Activated CD4-positive, alpha-beta T cell treated with anti-CD3 and anti-CD28 coated beads for 36 hours (primary cell): ENCODE measurements at regions of chr1 and their contacts with region 1.

Region 1: GRCh38 chr1:145978854-145979759 is 14.6 kb downstream of the POLR3GL start:
- DNase-seq: peak; percentile 91
- ATAC-seq: peak; percentile 86
- H3K4me3 Mint-ChIP-seq: no peak overlapping the region
- H3K27ac Mint-ChIP-seq: no peak overlapping the region
- H3K4me1 Mint-ChIP-seq: peaks cover 5% of the 10 kb centered on the region
- H3K27me3 Mint-ChIP-seq: no peaks in the 10 kb centered on the region

Region 2: DNA sequence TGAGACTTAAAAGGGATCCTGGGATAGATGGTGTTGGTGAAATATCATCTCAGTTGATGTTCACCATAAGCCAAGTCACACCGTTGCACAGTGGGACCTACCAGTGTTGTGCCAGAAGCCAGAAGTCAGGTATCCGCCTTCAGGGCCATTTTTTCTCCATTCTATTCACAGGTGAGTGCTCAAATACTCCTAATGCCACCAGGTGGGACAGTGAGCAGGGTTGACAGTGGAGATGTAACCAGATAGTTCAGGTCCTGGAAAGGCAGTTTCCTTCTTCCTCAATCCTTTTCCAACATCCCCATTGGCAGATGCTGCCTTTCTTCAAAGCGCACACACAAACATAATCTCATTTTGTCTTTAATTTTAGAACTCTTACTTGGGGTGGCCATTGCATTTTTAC is 248.2 kb before region 1 on chr1:
- CTCF ChIA-PET with region 1: no interaction called
- POLR2A ChIA-PET with region 1: no interaction called
- intact Hi-C with region 1: no loop called
- DNase-seq: no peak
- ATAC-seq: no peak
- H3K4me3 Mint-ChIP-seq: no peak overlapping the region
- H3K27ac Mint-ChIP-seq: no peak overlapping the region
- H3K4me1 Mint-ChIP-seq: no peaks in the 10 kb centered on the region
- H3K27me3 Mint-ChIP-seq: no peaks in the 10 kb centered on the region

Region 3: DNA sequence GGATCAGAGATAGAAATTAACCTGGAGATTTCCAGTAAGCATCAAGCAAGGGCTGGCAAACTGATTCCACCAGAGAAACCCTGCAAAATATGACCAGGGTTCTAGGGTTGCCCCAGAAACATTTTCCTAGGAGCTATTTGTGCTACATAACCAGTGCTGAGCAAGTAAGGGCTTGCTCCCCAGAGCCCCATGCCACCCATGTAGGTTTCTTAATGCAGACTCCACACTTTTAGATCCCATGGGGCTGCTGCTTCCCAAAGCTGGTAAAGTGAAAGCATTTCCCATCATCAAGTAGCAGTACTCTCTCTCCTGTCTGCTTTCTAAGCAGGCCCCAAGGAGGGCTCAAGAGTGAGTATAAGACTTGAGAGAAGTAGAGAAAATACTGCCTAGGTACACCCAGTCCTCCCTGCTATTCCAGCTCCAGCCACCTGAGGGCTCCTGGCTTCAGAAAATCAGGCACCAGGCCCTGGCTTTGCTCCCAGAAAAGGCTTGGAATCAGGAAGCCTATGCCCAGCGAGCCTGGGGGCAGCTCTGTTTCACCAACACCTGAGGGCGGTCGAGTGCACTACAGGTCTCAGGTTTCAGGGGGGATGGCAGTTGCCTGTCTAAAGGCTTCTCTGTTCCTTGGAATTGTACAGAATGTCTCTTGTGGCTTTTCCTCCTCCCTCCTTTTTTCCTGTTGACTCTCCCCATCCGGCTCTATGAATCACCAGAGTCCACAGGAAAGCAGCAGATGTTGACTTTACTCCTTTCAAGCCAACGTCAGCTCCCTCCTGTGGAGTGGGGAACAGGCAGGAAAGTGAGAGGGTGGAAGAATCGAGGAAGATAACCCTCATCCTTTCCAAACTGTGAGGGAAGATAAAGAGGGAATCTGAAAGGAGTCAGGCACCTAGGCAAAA is 87.3 kb before region 1 on chr1:
- CTCF ChIA-PET with region 1: interaction called, 5 read pairs
- POLR2A ChIA-PET with region 1: no interaction called
- intact Hi-C with region 1: loop called in 1 of 2 experiments (anchors 1 kb)
- DNase-seq: peak; percentile 74
- ATAC-seq: peak; percentile 78
- H3K4me3 Mint-ChIP-seq: no peak overlapping the region
- H3K27ac Mint-ChIP-seq: no peak overlapping the region
- H3K4me1 Mint-ChIP-seq: no peaks in the 10 kb centered on the region
- H3K27me3 Mint-ChIP-seq: no peaks in the 10 kb centered on the region

Region 4: GRCh38 chr1:145957443-145958319 is 21.4 kb before region 1 on chr1 and contains the start of gene LIX1L:
- CTCF ChIA-PET with region 1: interaction called, 46 read pairs
- POLR2A ChIA-PET with region 1: interaction called, 12 read pairs
- intact Hi-C with region 1: loop called in 1 of 2 experiments (anchors 1 kb)
- DNase-seq: peak; percentile 98
- ATAC-seq: peak; percentile 89
- H3K4me3 Mint-ChIP-seq: peak within 1 kb of the TSS; percentile 87
- H3K27ac Mint-ChIP-seq: peak within 1 kb of the TSS; percentile 93
- H3K4me1 Mint-ChIP-seq: peaks cover 59% of the 10 kb centered on the region
- H3K27me3 Mint-ChIP-seq: no peaks in the 10 kb centered on the region
- total RNA-seq, gene LIX1L: 44.9 to 49.4 TPM

Region 5: DNA sequence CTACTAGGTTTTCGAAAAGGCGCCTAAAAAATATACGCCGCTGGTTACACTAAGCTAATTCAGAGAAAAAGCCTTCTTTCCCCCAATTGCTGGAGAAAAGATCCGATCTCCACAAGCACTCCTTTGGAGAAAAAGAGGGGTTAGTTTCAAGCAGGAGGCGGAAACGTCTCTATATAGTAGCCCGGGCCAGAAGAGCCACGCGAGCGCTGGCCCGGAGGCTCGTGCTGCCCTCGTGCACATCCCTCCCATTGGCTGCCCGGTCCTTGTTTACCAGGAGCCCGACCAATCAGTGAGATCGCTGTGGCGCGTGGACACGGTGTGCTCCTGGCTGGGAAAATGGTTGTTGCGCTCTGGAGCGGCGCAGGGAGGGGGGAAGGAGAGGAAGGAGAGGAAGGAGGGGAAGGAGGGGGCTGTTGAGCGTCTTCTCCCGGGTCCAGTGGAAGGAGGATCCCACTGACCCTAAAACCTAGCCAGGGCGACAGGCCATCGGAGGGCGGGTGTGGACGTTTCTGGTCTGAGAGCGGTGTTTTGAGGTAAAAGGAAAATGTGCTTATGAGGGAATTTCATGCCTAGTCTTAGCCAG is 17.4 kb after region 1 on chr1 and contains the start of gene TXNIP:
- CTCF ChIA-PET with region 1: interaction called, 161 read pairs
- POLR2A ChIA-PET with region 1: interaction called, 127 read pairs
- intact Hi-C with region 1: loop called (anchors 1 kb)
- DNase-seq: peak; percentile 97
- ATAC-seq: peak; percentile 82
- H3K4me3 Mint-ChIP-seq: peak within 1 kb of the TSS; percentile 92
- H3K27ac Mint-ChIP-seq: peak within 1 kb of the TSS; percentile 99
- H3K4me1 Mint-ChIP-seq: peaks cover 68% of the 10 kb centered on the region
- H3K27me3 Mint-ChIP-seq: no peaks in the 10 kb centered on the region
- total RNA-seq, gene TXNIP: 112 TPM

Region 6: GRCh38 chr1:146012737-146013403 is 33.8 kb after region 1 on chr1:
- CTCF ChIA-PET with region 1: interaction called, 119 read pairs
- POLR2A ChIA-PET with region 1: no interaction called
- intact Hi-C with region 1: loop called in 1 of 2 experiments (anchors 1 kb)
- DNase-seq: peak; percentile 71
- ATAC-seq: peak; percentile 81
- H3K4me3 Mint-ChIP-seq: no peak overlapping the region
- H3K27ac Mint-ChIP-seq: peak overlapping the region; percentile 21
- H3K4me1 Mint-ChIP-seq: peaks cover 7% of the 10 kb centered on the region
- H3K27me3 Mint-ChIP-seq: peaks cover 5% of the 10 kb centered on the region

Region 7: GRCh38 chr1:146049436-146049835 is 70.3 kb after region 1 on chr1:
- CTCF ChIA-PET with region 1: interaction called, 4 read pairs
- POLR2A ChIA-PET with region 1: interaction called, 37 read pairs
- intact Hi-C with region 1: no loop called
- DNase-seq: no peak
- ATAC-seq: no peak
- H3K4me3 Mint-ChIP-seq: no peak overlapping the region
- H3K27ac Mint-ChIP-seq: no peak overlapping the region
- H3K4me1 Mint-ChIP-seq: peaks cover 26% of the 10 kb centered on the region
- H3K27me3 Mint-ChIP-seq: no peaks in the 10 kb centered on the region